Activated CD8-positive, alpha-beta T cell treated with anti-CD3 and anti-CD28 coated beads for 36 hours (primary cell): ENCODE measurements at regions of chr17 and their contacts with region 1.

Region 1: DNA sequence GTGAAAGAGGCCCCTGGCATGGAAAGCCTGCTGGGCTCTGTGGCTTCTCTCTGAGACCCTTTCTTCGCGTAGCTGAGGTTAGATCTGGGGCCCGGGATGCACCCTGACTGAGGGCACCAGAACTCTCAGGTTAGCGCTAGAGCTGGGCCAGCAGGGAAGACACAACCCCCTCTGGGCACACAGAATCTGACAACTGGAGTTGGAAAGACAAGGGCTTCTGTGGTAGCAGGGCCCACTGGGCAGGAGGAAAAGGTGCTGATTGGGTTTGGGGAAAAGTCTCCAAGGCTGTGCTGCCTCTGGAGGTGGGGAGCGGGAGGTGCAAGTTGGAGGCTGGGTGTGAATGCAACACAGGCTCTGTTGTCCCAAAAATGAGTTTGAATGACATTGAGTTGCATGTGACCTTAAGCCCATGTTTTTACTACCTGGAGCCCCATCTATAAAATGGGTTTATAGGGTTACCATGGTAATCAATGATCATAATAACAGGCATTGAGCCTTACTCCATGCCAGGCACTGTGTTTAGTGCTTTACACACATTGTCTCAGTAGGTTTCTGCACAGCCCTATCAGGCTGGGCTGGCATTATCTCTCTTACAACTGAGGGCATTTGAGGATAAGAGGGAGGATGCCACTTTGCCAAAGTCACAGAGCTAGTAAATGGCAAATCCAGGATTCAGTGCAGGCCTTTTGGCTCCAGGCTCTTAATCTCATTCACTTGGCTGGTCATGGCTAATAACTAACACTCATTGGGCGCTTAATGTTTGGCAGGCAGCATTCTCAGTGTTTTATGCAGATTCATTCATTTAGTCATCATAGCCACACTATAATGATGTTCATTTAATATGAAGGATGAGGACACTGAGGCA is 9.5 kb upstream of the IGFBP4 start:
- DNase-seq: peak; percentile 43
- ATAC-seq: peak; percentile 82
- H3K4me3 Mint-ChIP-seq: no peak overlapping the region
- H3K27ac Mint-ChIP-seq: no peak overlapping the region
- H3K4me1 Mint-ChIP-seq: peaks cover 15% of the 10 kb centered on the region
- H3K27me3 Mint-ChIP-seq: no peaks in the 10 kb centered on the region
- CTCF ChIP-seq: peak; percentile 52

Region 2: GRCh38 chr17:40422990-40423616 is 10.7 kb before region 1 on chr17:
- CTCF ChIA-PET with region 1: interaction called, 13 read pairs
- POLR2A ChIA-PET with region 1: interaction called, 4 read pairs
- intact Hi-C with region 1: no loop called
- DNase-seq: no peak
- ATAC-seq: no peak
- H3K4me3 Mint-ChIP-seq: no peak overlapping the region
- H3K27ac Mint-ChIP-seq: no peak overlapping the region
- H3K4me1 Mint-ChIP-seq: peaks cover 37% of the 10 kb centered on the region
- H3K27me3 Mint-ChIP-seq: no peaks in the 10 kb centered on the region
- CTCF ChIP-seq: no peak

Region 3: GRCh38 chr17:40614817-40615294 is 181.1 kb after region 1 on chr17:
- CTCF ChIA-PET with region 1: no interaction called
- POLR2A ChIA-PET with region 1: no interaction called
- intact Hi-C with region 1: no loop called
- DNase-seq: peak; percentile 39
- ATAC-seq: peak; percentile 15
- H3K4me3 Mint-ChIP-seq: peak overlapping the region; percentile 65
- H3K27ac Mint-ChIP-seq: peak overlapping the region; percentile 92
- H3K4me1 Mint-ChIP-seq: peaks cover 80% of the 10 kb centered on the region
- H3K27me3 Mint-ChIP-seq: no peaks in the 10 kb centered on the region
- CTCF ChIP-seq: no peak